K562 (cell line): ENCODE measurements at regions of chr1 and their contacts with region 1.

Region 1: DNA sequence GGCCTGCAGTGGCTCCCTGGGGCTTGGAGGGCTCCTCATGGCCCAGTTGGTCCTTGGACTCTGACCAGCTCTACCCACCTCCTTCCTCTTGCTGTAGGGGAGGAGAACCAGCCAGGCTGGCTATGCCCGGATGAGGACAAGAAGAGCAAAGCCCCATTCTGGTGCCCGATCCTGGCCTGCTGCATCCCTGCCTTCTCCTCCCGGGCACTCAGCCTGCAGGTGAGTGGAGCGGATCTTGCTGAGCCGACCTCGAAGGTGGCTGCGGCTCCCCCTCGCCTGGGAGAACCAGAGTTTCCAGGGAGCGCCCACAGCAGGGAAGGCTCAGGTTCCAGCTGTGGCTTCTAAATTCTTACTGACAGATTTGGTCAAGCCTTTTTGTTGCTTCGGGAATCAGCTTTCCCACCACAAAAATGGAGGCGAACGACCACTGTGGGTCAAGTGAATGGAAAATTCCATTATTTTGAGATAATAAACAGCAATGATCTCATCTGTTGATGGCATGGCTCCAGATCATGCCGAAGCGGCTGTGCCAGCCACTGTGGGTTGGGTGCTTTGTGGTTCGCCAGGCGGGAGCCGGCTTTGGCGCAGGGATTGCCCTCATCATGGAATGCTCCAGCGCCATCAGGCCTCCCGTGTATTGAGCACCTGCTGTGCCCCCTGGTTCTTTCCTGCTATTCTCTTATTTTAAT is 106.5 kb upstream of the ACTL8 start:
- DNase-seq: no peak
- ATAC-seq: no peak
- H3K4me3 ChIP-seq: no peak overlapping the region
- H3K27ac ChIP-seq: no peak overlapping the region
- H3K4me1 ChIP-seq: 0 out of 5 replicates have a peak, but pooled peaks cover 0 to 6% of the 10 kb centered on the region in 2 experiments
- H3K27me3 ChIP-seq: peaks cover 34 to 69% of the 10 kb centered on the region in 2 experiments
- CTCF ChIP-seq: no peak
- EP300 ChIP-seq: no peak
- POLR2A ChIP-seq: no peak
- RAD21 ChIP-seq: no peak

Region 2: DNA sequence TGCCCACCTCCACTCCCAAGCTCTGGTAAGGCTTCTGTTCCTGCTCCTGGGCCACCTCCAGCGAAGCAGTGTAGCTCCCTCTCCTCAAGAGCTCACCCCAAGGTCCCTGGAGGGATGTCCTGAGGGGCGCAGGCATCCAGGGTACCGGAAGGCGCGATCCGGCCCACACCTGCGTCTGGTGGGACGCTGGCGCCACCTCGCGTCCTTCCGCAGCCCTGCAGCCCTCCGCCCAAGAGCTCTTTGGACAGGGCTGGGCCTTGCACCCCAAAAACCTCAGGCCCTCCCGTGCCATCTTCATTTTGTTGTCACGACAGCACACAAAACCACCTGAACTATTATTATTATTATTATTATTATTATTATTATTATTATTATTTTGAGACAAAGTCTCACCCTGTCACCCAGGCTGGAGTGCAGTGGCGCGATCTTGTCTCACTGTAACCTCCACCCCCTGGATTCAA is 932.8 kb after region 1 on chr1:
- CTCF ChIA-PET with region 1: no interaction called
- POLR2A ChIA-PET with region 1: no interaction called
- in situ Hi-C with region 1: loop called (anchors 10 kb)
- intact Hi-C with region 1: no loop called
- DNase-seq: peak; percentile 66 to 89 (median 82)
- ATAC-seq: peak; percentile 91
- H3K4me3 ChIP-seq: no peak overlapping the region
- H3K27ac ChIP-seq: no peak overlapping the region
- H3K4me1 ChIP-seq: peaks cover 0 to 5% of the 10 kb centered on the region in 2 experiments; a peak in 2 of 5 replicates
- H3K27me3 ChIP-seq: peaks cover 0 to 1% of the 10 kb centered on the region in 2 experiments; a peak in 1 of 5 replicates
- CTCF ChIP-seq: peak; percentile 87 to 90 (median 89)
- EP300 ChIP-seq: no peak
- POLR2A ChIP-seq: no peak
- RAD21 ChIP-seq: peak; percentile 83 to 89